ENCODE measurements at regions of chr11 and their contacts with region 1.

Region 1: GRCh38 chr11:36746886-36747710 is 149.1 kb upstream of the RAG2 start:
- H3K4me3 Mint-ChIP-seq: no peak overlapping the region
- H3K27ac Mint-ChIP-seq: no peak overlapping the region
- H3K4me1 Mint-ChIP-seq: peaks cover 8% of the 10 kb centered on the region
- H3K27me3 Mint-ChIP-seq: peaks cover 22% of the 10 kb centered on the region

Region 2: DNA sequence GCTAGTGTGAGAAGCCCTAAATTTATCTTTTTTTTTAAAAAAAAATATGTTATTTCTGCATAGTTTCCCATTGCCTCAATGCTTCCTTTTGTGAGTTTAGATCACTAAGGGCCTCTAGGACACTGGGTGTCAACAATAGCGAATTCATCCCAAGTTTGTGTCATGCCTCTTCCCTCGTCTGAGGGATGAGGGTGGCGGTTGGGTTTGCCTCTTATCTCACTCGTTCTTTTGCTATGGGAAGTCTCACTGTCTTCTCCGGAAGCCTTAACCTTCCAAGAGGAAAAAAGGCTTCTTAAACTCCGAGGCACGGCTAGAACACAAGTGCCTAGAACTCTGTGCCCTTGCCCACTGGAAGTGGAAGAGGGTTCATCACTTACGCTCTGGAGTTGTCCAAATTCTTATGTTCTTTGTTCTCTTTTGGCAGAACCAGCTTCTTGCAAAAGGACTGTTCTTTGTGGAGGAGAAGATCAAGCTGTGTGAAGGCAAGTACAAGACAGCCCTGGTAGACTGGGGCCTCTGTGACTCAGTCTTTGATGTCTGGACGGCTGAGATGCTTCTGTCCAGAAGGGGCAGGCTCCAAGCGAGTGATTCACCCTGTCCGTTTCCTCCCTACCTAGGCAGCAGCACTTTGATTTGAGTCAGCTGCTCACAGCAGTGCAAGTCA is 315.5 kb before region 1 on chr11:
- intact Hi-C with region 1: no loop called
- H3K4me3 Mint-ChIP-seq: no peak overlapping the region
- H3K27ac Mint-ChIP-seq: no peak overlapping the region
- H3K4me1 Mint-ChIP-seq: peaks cover 22% of the 10 kb centered on the region
- H3K27me3 Mint-ChIP-seq: peaks cover 26% of the 10 kb centered on the region

Region 3: DNA sequence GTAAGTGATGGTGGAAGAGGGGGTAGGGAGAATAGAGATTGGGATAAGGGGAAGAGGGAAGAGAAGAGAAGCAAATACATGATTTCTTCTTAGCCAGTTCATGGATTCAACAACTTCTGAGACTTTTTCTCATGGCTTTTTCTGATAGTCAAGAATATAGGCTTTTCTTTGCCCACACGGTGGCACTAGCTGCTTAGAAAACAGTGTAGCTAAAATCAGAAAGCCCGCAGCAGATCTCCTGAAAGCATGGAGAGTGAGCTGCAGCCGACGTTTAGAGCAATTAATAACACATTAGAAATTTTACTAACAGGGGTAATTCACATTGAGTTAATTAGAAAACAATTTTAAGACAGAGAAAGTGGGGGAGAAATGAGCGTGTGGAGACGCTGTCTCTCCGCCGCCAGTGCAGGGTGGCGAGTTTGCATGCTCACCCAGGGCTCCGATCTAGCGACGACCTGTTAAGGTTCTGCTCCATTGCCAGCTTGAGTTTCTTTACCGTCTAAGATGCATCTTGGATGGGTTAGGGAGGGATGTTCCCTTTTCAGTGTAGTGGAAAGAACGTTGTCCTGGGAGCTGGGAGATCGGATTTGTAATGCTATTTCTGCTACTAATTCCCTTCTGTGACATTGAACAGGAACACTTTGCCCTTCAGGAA is 182.6 kb before region 1 on chr11:
- intact Hi-C with region 1: loop called (anchors 1 kb)
- H3K4me3 Mint-ChIP-seq: peak overlapping the region; percentile 72
- H3K27ac Mint-ChIP-seq: no peak overlapping the region
- H3K4me1 Mint-ChIP-seq: peaks cover 11% of the 10 kb centered on the region
- H3K27me3 Mint-ChIP-seq: peaks cover 15% of the 10 kb centered on the region

Region 4: GRCh38 chr11:36702330-36703055 is 44.6 kb before region 1 on chr11:
- intact Hi-C with region 1: loop called (anchors 1 kb)
- H3K4me3 Mint-ChIP-seq: no peak overlapping the region
- H3K27ac Mint-ChIP-seq: no peak overlapping the region
- H3K4me1 Mint-ChIP-seq: peaks cover 6% of the 10 kb centered on the region
- H3K27me3 Mint-ChIP-seq: peaks cover 2% of the 10 kb centered on the region

Region 5: DNA sequence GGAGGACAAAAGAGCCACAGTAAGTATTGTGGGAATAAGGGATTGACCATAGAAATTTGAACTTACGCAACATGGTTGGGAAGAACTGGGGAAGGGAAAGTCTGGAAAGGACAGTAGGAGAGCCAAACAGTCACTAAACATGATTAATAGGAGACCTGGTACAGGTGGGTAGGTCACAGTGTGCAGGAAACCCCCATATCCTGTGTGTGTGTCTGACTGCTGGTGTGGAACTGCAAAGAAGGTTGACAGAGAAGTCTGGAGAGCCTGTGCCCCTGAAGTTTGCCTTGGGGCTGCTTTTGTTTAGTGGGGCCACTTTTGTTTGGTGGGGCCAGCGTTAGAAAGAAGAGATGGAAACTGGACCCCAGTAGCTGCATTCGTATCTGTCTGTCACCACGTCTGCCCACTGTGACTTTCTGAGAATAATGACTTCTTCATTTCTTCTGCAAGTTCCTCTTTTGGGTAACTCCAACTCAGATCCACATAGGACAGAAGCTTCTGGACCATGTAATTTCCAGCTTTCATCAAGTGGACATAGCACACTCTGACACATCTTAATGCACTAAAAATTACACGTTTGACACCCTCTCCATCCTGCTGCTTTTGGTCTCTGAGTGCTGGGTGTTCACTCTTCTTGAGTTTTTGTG is 22.2 kb before region 1 on chr11:
- intact Hi-C with region 1: loop called (anchors 1 kb)
- H3K4me3 Mint-ChIP-seq: peak overlapping the region; percentile 9
- H3K27ac Mint-ChIP-seq: peak overlapping the region; percentile 18
- H3K4me1 Mint-ChIP-seq: peaks cover 40% of the 10 kb centered on the region
- H3K27me3 Mint-ChIP-seq: peaks cover 11% of the 10 kb centered on the region

Region 6: GRCh38 chr11:36774603-36775002 is 27.5 kb after region 1 on chr11:
- intact Hi-C with region 1: no loop called
- H3K4me3 Mint-ChIP-seq: no peak overlapping the region
- H3K27ac Mint-ChIP-seq: no peak overlapping the region
- H3K4me1 Mint-ChIP-seq: peaks cover 6% of the 10 kb centered on the region
- H3K27me3 Mint-ChIP-seq: no peaks in the 10 kb centered on the region

Region 7: DNA sequence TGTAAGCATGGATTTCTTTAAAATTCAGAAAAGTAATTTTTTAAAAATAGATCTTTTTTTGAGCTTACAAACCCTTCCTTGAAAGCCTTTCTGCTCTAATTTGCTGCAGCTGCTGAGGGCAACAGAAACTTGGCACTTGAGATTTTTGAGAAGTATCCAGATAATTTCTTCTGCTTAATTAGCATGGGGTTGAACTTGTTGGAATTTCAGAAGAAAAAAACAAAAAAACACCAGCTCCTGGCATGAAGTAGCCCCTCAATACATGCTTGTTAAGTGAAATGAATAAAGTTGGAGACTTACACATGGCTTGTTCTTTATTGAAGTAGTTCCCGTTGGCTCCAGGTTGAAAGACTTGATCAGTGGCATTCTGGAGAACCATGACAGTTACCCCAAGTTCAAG is 182.3 kb after region 1 on chr11:
- intact Hi-C with region 1: no loop called
- H3K4me3 Mint-ChIP-seq: no peak overlapping the region
- H3K27ac Mint-ChIP-seq: no peak overlapping the region
- H3K4me1 Mint-ChIP-seq: no peaks in the 10 kb centered on the region
- H3K27me3 Mint-ChIP-seq: no peaks in the 10 kb centered on the region

Measured in dendritic cell treated with granulocyte-macrophage colony-stimulating factor and Interleukin-4, amounts not matched to agents 40 ng/mL and 50 ng/mL, for 4 days (primary cell).